Right ventricle myocardium inferior (tissue), 1 donor: ENCODE measurements at regions of chr1 and their contacts with region 1.

Region 1: GRCh38 chr1:223845810-223846682 is at the start of gene TP53BP2:
- DNase-seq: peak; percentile 95
- ATAC-seq: peak; percentile 98
- total RNA-seq, gene TP53BP2: 18.7 TPM

Region 2: GRCh38 chr1:222880586-222880985 is 965.5 kb before region 1 on chr1:
- intact Hi-C with region 1: no loop called
- DNase-seq: no peak
- ATAC-seq: no peak

Region 3: GRCh38 chr1:223712194-223712849 is 133.7 kb before region 1 on chr1 and contains the start of gene CAPN2:
- intact Hi-C with region 1: loop called (anchors 5 kb)
- DNase-seq: peak; percentile 92
- ATAC-seq: peak; percentile 95
- total RNA-seq, gene CAPN2: 85.4 TPM

Region 4: GRCh38 chr1:223811634-223812415 is 34.2 kb before region 1 on chr1:
- intact Hi-C with region 1: loop called (anchors 2 kb)
- DNase-seq: no peak
- ATAC-seq: peak; percentile 56

Region 5: DNA sequence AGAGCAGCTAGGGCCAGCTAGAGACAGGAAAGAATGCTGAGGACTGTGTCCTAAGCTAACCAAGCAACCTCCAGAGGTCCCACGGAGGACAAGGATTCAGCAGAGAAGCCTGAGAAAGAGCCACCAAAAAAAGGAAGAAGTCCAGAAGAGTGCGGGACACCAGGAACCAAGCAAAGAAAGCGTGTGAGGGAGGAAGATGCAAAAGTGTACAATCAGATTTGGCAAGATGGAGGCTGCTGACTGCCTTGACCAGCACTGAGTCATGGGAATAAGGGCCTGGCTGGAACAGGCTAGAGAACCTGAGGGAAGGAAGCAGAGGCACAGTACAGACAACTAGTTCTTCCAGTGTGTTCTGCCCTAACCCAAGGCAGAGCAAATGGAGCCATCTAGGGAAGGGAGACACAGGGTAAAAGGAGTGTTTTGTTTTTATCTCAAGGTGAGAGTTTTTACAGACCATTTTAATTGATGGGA is 18.8 kb before region 1 on chr1:
- intact Hi-C with region 1: no loop called
- DNase-seq: no peak
- ATAC-seq: peak; percentile 47

Region 6: GRCh38 chr1:223887747-223888418 is 41.8 kb after region 1 on chr1:
- intact Hi-C with region 1: loop called (anchors 1 kb)
- DNase-seq: no peak
- ATAC-seq: peak; percentile 67